Activated B cell treated with CpG ODN at 0.5 μM for 24 hours (primary cell): ENCODE measurements at regions of chr5 and their contacts with region 1.

Region 1: DNA sequence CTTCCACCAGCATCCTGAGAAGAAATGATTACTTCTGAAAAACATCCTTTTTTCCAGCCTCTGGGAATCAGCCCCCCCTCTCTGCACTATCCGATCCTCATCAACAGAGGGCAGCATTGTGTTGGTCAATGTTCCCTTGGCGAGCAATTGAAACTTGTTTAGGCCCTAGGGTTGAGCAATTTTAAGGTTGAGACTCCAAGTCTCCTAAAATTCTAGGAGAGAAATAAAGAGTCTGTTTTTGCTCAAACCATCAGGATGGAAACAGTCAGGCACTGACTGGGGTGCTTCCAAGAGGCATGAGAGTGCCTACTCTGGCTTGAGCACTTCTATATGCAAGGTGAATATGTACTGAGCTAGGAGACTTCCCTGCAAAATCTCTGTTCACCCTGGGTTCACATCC is 12.4 kb upstream of the CYFIP2 start:
- DNase-seq: no peak
- ATAC-seq: peak; percentile 84
- H3K4me3 Mint-ChIP-seq: peak overlapping the region; percentile 57
- H3K27ac Mint-ChIP-seq: peak overlapping the region; percentile 85
- H3K4me1 Mint-ChIP-seq: peaks cover 28% of the 10 kb centered on the region
- H3K27me3 Mint-ChIP-seq: no peaks in the 10 kb centered on the region
- CTCF ChIP-seq: peak; percentile 94

Region 2: GRCh38 chr5:156963125-156963524 is 290.4 kb before region 1 on chr5 and contains the start of gene TIMD4:
- CTCF ChIA-PET with region 1: no interaction called
- POLR2A ChIA-PET with region 1: interaction called, 14 read pairs
- intact Hi-C with region 1: no loop called
- DNase-seq: no peak
- ATAC-seq: no peak
- H3K4me3 Mint-ChIP-seq: no peak within 1 kb of the TSS
- H3K27ac Mint-ChIP-seq: no peak within 1 kb of the TSS
- H3K4me1 Mint-ChIP-seq: peaks cover 9% of the 10 kb centered on the region
- H3K27me3 Mint-ChIP-seq: no peaks in the 10 kb centered on the region
- CTCF ChIP-seq: no peak
- total RNA-seq, gene TIMD4: not detected in 2 replicates

Region 3: DNA sequence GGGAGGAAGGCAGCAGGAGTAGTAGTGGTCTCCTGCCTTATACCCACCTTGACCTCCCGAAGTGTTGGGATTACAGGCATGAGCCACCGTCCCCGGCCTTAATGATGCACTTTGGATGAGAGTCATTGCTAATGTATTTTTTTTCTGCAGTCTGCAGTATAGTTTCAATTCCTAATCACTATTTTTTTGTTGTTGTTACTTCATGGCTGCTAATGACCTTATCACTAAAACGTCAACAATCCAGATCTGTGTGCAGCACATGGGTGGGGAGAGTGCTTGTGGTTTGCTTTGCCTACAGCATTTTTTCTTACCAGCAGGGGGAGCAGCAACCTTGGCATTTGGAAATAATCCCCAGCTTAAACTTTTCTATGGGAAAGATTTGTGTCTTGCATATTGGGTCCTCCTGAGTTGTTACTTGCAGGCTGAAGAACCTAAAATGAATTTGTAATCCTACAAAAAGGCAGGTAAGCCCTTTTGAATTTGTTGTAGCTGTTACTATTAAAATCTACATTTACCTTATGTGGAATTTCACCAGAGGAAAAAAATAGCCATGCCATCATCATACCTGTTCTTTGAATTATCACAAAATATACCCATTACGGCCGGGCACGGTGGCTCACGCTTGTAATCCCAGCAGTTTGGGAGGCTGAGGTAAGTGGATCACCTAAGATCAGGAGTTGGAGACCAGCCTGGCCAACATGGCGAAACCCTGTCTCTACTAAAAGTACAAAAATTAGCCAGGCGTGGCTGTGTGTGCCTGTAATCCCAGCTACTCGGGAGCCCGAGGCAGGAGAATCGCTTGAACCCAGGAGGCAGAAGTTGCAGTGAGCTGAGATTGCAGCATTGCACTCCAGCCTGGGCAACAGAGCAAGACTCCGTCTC is 104.6 kb before region 1 on chr5:
- CTCF ChIA-PET with region 1: interaction called, 105 read pairs
- POLR2A ChIA-PET with region 1: interaction called, 21 read pairs
- intact Hi-C with region 1: loop called (anchors 1 kb)
- DNase-seq: no peak
- ATAC-seq: peak; percentile 81
- H3K4me3 Mint-ChIP-seq: no peak overlapping the region
- H3K27ac Mint-ChIP-seq: no peak overlapping the region
- H3K4me1 Mint-ChIP-seq: peaks cover 8% of the 10 kb centered on the region
- H3K27me3 Mint-ChIP-seq: no peaks in the 10 kb centered on the region
- CTCF ChIP-seq: peak; percentile 45

Region 4: DNA sequence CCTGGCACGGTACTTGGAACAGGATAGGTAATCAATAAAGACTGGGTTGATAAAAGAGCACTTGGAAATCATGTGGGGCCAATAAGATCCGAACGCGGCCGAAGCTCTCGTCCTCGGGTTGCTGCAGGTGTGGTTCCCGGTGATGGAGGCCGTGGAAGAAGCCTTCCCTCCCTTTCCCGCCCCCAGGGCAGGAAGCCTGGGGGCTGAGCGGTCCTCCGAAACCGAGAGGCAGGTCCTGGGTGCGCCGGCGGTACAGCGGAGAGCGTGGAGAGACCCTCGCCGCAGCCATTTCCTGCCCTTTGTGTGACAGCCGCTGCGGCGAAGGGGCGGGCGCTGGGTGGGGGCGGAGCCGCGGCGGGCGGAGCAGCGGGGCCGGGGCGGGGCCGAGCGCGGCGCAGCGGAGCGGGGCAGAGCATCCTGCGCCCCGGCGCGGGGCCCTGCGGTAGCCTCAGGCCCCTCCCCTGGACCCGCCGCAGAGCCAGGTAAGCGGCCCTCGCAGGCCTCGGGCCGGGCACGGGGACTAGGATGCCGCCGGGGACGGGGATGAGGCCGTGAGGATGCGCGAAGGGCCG is 12.3 kb after region 1 on chr5 and contains the start of gene CYFIP2:
- CTCF ChIA-PET with region 1: interaction called, 51 read pairs
- POLR2A ChIA-PET with region 1: interaction called, 12 read pairs
- intact Hi-C with region 1: loop called (anchors 1 kb)
- DNase-seq: peak; percentile 76
- ATAC-seq: peak; percentile 90
- H3K4me3 Mint-ChIP-seq: peak within 1 kb of the TSS; percentile 97
- H3K27ac Mint-ChIP-seq: peak within 1 kb of the TSS; percentile 99
- H3K4me1 Mint-ChIP-seq: peaks cover 69% of the 10 kb centered on the region
- H3K27me3 Mint-ChIP-seq: no peaks in the 10 kb centered on the region
- CTCF ChIP-seq: no peak
- total RNA-seq, gene CYFIP2: 385 and 471 TPM in 2 replicates

Region 5: GRCh38 chr5:157283434-157283833 is 29.9 kb after region 1 on chr5:
- CTCF ChIA-PET with region 1: interaction called, 22 read pairs
- POLR2A ChIA-PET with region 1: no interaction called
- intact Hi-C with region 1: loop called (anchors 1 kb)
- DNase-seq: peak; percentile 40
- ATAC-seq: peak; percentile 99
- H3K4me3 Mint-ChIP-seq: peak overlapping the region; percentile 52
- H3K27ac Mint-ChIP-seq: peak overlapping the region; percentile 89
- H3K4me1 Mint-ChIP-seq: peaks cover 70% of the 10 kb centered on the region
- H3K27me3 Mint-ChIP-seq: no peaks in the 10 kb centered on the region
- CTCF ChIP-seq: no peak

Region 6: GRCh38 chr5:157312492-157312891 is 58.9 kb after region 1 on chr5:
- CTCF ChIA-PET with region 1: interaction called, 176 read pairs
- POLR2A ChIA-PET with region 1: interaction called, 18 read pairs
- intact Hi-C with region 1: loop called (anchors 1 kb)
- DNase-seq: no peak
- ATAC-seq: peak; percentile 77
- H3K4me3 Mint-ChIP-seq: no peak overlapping the region
- H3K27ac Mint-ChIP-seq: peak overlapping the region; percentile 77
- H3K4me1 Mint-ChIP-seq: peaks cover 35% of the 10 kb centered on the region
- H3K27me3 Mint-ChIP-seq: no peaks in the 10 kb centered on the region
- CTCF ChIP-seq: peak; percentile 42